A673 (cell line): ENCODE measurements at regions of chr2 and their contacts with region 1.

Region 1: DNA sequence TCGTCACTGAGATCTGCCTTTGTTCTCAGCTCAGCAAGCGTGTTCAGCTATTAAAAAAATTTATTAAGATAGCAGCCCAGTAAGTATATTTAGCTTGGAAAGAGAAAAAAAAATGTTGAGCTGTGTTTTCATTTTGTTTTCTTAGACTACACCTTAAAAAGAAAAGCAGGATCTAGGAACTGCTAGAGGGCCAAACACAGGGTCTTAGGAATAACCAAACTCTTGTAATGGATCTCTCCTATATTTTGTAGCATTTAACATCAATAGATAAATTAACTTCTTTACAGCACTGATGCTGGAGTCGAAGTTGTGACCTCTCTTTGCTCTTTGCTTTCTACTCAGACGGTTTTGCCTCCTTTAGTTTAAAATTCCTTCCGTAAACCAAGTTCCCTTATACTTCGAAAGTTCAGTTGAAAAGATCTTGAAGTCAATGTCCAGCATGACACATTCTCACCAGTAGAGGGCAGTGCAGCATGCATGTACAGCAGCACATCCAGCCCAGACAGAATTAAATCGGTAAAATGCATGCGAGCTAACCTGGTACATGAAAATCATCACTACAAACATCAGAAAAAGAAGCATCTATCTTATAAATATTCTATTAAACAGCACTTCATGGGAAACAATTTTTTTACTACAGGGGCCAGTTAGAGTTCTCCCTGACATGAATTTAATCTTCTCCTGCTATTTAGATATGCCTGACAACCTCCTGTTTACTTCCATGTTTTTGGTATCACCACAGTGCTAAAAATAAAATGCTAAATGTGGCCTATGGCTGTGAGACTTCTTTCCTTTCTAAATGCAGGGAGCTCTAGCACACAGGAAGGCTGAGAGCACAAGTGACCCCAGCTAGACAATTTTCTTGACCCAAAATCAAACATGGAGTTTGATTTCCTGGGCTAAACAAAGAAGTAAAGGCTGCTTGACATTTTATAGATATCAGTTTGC is 48.2 kb upstream of the MAP3K20 start:
- DNase-seq: peak; percentile 87
- H3K4me3 ChIP-seq: no peak overlapping the region
- H3K27ac ChIP-seq: no peak overlapping the region
- H3K4me1 ChIP-seq: no peaks in the 10 kb centered on the region
- H3K27me3 ChIP-seq: no peaks in the 10 kb centered on the region
- CTCF ChIP-seq: peak; percentile 94

Region 2: DNA sequence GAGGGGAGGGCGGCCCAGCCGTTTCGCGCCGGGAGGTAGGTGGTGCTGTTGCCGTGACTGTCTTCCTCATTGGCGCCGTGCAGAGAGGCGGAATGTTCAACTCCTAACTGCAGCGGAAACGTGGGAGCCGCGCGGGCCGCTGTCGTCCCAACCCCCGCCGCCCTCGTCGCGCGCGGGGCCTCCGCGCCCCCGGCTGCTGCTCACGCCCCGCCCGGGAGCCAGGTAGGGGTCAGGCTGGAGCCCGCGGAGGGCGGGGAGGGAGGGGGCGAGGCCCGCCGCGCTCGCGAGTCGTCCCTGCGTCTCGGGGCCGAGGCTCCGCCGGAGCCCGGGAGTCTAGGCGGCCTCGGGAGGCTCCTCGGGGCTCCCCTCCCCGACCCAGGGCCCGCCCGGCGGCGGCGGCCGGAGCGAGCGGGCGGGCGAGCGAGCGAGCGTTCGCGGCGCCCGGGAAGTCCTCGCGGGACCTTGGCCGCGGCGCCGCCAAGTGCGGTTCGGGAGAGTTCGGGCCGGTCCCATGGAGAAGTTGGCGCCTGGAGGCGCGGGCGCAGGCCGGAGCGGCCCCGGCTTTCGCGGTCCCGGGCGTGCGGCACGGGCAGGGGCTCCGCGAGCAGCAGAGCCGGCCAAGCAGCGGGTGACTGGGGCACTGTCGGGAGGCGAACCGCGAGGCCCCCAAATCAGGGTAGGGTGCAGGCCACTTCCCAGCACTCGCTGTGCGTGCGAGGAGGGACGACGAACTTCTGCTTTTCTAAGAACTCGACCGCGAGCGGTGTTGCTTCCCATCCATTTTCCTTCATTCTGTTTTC is 48.5 kb after region 1 on chr2 and contains the start of gene MAP3K20:
- CTCF ChIA-PET with region 1: no interaction called
- POLR2A ChIA-PET with region 1: no interaction called
- intact Hi-C with region 1: loop called (anchors 5 kb)
- DNase-seq: peak; percentile 83
- H3K4me3 ChIP-seq: peak within 1 kb of the TSS; percentile 76
- H3K27ac ChIP-seq: peak within 1 kb of the TSS; percentile 95
- H3K4me1 ChIP-seq: peaks cover 16% of the 10 kb centered on the region
- H3K27me3 ChIP-seq: no peaks in the 10 kb centered on the region
- CTCF ChIP-seq: peak; percentile 51
- total RNA-seq, gene MAP3K20: 40.0 and 43.7 TPM in 2 replicates

Region 3: GRCh38 chr2:173210270-173211196 is 183.1 kb after region 1 on chr2:
- CTCF ChIA-PET with region 1: interaction called, 27 read pairs
- POLR2A ChIA-PET with region 1: no interaction called
- intact Hi-C with region 1: loop called (anchors 1 kb)
- DNase-seq: peak; percentile 86
- H3K4me3 ChIP-seq: no peak overlapping the region
- H3K27ac ChIP-seq: no peak overlapping the region
- H3K4me1 ChIP-seq: peaks cover 4% of the 10 kb centered on the region
- H3K27me3 ChIP-seq: no peaks in the 10 kb centered on the region
- CTCF ChIP-seq: peak; percentile 92

Region 4: DNA sequence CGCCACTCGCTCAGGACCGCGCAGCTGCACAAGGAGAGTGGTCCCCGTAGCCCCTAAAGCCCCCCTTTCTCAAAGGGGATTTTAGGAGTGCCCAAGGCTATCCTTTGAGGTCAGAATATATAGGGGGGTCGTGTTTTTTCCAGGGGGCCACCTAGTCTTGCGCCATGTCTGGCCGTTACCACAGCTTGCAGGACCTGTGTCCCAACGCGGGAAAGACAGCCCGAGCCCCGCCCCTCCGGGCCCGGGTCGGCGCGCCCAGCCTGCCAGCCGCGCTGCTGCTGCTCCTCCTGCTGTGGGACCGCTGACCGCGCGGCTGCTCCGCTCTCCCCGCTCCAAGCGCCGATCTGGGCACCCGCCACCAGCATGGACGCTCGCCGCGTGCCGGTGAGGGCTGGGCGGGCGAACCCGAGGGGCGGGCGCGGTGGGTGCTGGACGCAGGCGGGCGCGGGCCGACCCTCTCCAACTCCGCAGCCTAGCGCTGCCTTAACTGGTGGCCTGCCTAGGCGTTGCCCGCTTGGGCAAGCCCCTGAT is 327.2 kb after region 1 on chr2 and contains the start of gene CDCA7:
- CTCF ChIA-PET with region 1: no interaction called
- POLR2A ChIA-PET with region 1: no interaction called
- intact Hi-C with region 1: loop called (anchors 10 kb)
- DNase-seq: peak; percentile 87
- H3K4me3 ChIP-seq: peak within 1 kb of the TSS; percentile 98
- H3K27ac ChIP-seq: peak within 1 kb of the TSS; percentile 99
- H3K4me1 ChIP-seq: peaks cover 11% of the 10 kb centered on the region
- H3K27me3 ChIP-seq: no peaks in the 10 kb centered on the region
- CTCF ChIP-seq: no peak
- total RNA-seq, gene CDCA7: 64.9 and 72.5 TPM in 2 replicates

Region 5: GRCh38 chr2:173448938-173449471 is 421.6 kb after region 1 on chr2:
- CTCF ChIA-PET with region 1: interaction called, 3 read pairs
- POLR2A ChIA-PET with region 1: no interaction called
- intact Hi-C with region 1: loop called (anchors 5 kb)
- DNase-seq: peak; percentile 92
- H3K4me3 ChIP-seq: peak overlapping the region; percentile 41
- H3K27ac ChIP-seq: no peak overlapping the region
- H3K4me1 ChIP-seq: no peaks in the 10 kb centered on the region
- H3K27me3 ChIP-seq: peaks cover 14% of the 10 kb centered on the region
- CTCF ChIP-seq: peak; percentile 89